CD4-positive, alpha-beta memory T cell (primary cell): ENCODE measurements at regions of chr15 and their contacts with region 1.

Region 1: GRCh38 chr15:73633111-73633990 is at the start of gene NPTN:
- DNase-seq: peak; percentile 96 to 98 (median 98)
- H3K4me3 ChIP-seq: peak within 1 kb of the TSS; percentile 40 to 69
- H3K4me3 Mint-ChIP-seq: peak within 1 kb of the TSS; percentile 87 to 94 (median 94)
- H3K27ac ChIP-seq: peak within 1 kb of the TSS; percentile 62
- H3K27ac Mint-ChIP-seq: peak within 1 kb of the TSS; percentile 80 to 96 (median 90)
- H3K4me1 ChIP-seq: peaks cover 37% of the 10 kb centered on the region
- H3K4me1 Mint-ChIP-seq: peaks cover 25 to 52% (median 46%) of the 10 kb centered on the region in 4 donors
- H3K27me3 ChIP-seq: no peaks in the 10 kb centered on the region
- H3K27me3 Mint-ChIP-seq: peaks cover 2 to 10% of the 10 kb centered on the region in 2 donors
- total RNA-seq, gene NPTN: 36.5 to 36.6 TPM

Region 2: DNA sequence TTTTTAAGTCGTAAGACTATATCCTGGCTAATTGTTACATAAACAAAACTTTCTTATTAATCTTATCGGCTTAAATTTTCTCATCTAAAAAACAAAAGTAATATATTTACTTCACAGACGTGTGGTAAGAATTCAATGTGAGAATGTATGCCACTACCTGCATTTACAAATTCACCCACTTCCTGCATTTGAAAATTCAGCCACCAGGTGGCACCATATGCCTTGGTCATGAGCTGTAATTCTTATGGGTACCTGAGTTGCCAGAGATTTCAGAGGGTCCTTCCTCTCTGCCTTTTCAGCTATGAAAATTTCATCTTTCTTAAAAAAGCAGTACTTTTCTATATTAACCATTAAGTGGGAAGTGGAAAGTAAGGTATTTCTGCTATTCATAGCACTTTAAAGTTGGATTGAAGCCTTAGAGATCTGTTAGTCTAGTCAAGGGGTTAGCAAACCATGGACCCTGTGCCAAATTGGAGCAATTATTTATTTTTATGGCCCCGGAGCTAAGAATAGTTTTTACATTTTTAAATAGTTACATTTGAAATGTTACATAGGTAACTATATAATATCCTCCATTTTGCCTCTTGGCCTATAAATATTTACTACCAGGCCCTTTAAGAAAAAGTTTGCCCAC is 392.4 kb before region 1 on chr15:
- CTCF ChIA-PET with region 1: interaction called, 4 read pairs
- POLR2A ChIA-PET with region 1: no interaction called
- intact Hi-C with region 1: loop called (anchors 1 kb)
- DNase-seq: peak; percentile 56 to 72 (median 67)
- H3K4me3 ChIP-seq: no peak overlapping the region
- H3K4me3 Mint-ChIP-seq: no peak overlapping the region
- H3K27ac ChIP-seq: no peak overlapping the region
- H3K27ac Mint-ChIP-seq: no peak overlapping the region
- H3K4me1 ChIP-seq: no peaks in the 10 kb centered on the region
- H3K4me1 Mint-ChIP-seq: no peaks in the 10 kb centered on the region
- H3K27me3 ChIP-seq: no peaks in the 10 kb centered on the region
- H3K27me3 Mint-ChIP-seq: no peaks in the 10 kb centered on the region

Region 3: DNA sequence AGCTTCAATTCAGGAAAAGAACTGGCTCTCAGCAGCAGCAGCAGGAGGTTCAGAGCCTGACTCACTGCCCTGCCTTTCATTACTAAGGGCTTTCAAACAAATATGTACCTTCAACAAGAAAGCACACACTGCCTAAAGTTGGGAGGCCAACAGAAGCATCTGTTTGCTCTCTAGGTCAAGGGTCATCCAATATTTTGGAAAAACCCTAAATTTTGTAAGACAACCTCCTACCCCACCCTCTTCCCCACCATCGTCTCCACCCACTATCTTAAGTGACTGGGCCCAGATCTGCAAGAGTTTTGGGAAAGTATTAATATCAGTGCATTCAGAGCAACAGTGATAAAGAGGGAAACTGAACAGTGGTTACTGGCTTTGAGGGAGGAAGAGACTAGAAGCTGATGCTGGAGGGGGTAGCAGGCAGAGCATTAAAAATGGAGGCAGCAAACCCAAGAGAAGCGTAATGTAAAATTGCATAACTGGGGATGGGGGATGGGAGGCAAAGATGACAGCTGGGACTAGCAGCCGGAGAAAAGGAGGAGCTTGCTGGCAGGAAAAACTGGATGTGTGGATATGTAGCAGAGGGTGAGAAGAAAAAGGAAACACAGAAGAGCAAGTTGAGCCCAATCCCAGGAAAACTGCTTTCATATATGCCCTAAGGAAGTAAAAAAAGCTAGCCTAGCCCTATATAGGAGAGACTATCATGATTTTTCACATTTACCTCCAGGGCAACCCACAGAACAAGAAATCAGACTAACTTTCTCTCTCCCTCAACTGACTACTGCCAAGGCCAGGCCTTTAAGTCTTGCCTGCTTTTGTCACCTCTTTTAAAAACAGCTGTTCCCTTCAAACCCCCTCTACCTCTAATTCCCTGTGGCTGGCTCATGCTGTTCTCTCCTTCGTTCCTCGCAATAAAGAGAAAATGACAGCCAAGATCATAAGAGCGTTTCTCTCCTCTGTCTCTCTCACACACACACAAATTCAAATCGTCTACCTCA is 31.6 kb before region 1 on chr15:
- CTCF ChIA-PET with region 1: interaction called, 28 read pairs
- POLR2A ChIA-PET with region 1: no interaction called
- intact Hi-C with region 1: no loop called
- DNase-seq: no peak
- H3K4me3 ChIP-seq: no peak overlapping the region
- H3K4me3 Mint-ChIP-seq: no peak overlapping the region
- H3K27ac ChIP-seq: no peak overlapping the region
- H3K27ac Mint-ChIP-seq: no peak overlapping the region
- H3K4me1 ChIP-seq: peaks cover 29% of the 10 kb centered on the region
- H3K4me1 Mint-ChIP-seq: peaks cover 17 to 44% (median 28%) of the 10 kb centered on the region in 4 donors
- H3K27me3 ChIP-seq: no peaks in the 10 kb centered on the region
- H3K27me3 Mint-ChIP-seq: no peaks in the 10 kb centered on the region

Region 4: GRCh38 chr15:73617301-73617831 is 16.0 kb before region 1 on chr15:
- CTCF ChIA-PET with region 1: interaction called, 55 read pairs
- POLR2A ChIA-PET with region 1: interaction called, 4 read pairs
- intact Hi-C with region 1: no loop called
- DNase-seq: no peak
- H3K4me3 ChIP-seq: no peak overlapping the region
- H3K4me3 Mint-ChIP-seq: no peak overlapping the region
- H3K27ac ChIP-seq: no peak overlapping the region
- H3K27ac Mint-ChIP-seq: peak overlapping the region in 1 of 7 donors; percentile 3
- H3K4me1 ChIP-seq: peaks cover 8% of the 10 kb centered on the region
- H3K4me1 Mint-ChIP-seq: peaks cover 29 to 51% (median 39%) of the 10 kb centered on the region in 4 donors
- H3K27me3 ChIP-seq: no peaks in the 10 kb centered on the region
- H3K27me3 Mint-ChIP-seq: no peaks in the 10 kb centered on the region

Region 5: GRCh38 chr15:73677146-73677607 is 43.8 kb after region 1 on chr15:
- CTCF ChIA-PET with region 1: interaction called, 14 read pairs
- POLR2A ChIA-PET with region 1: no interaction called
- intact Hi-C with region 1: loop called (anchors 2 kb)
- DNase-seq: peak; percentile 39 to 60 (median 48)
- H3K4me3 ChIP-seq: no peak overlapping the region
- H3K4me3 Mint-ChIP-seq: no peak overlapping the region
- H3K27ac ChIP-seq: no peak overlapping the region
- H3K27ac Mint-ChIP-seq: no peak overlapping the region
- H3K4me1 ChIP-seq: no peaks in the 10 kb centered on the region
- H3K4me1 Mint-ChIP-seq: peaks cover 0 to 5% (median 0%) of the 10 kb centered on the region in 4 donors
- H3K27me3 ChIP-seq: peaks cover 2% of the 10 kb centered on the region
- H3K27me3 Mint-ChIP-seq: peaks cover 17 to 24% of the 10 kb centered on the region in 2 donors

Region 6: DNA sequence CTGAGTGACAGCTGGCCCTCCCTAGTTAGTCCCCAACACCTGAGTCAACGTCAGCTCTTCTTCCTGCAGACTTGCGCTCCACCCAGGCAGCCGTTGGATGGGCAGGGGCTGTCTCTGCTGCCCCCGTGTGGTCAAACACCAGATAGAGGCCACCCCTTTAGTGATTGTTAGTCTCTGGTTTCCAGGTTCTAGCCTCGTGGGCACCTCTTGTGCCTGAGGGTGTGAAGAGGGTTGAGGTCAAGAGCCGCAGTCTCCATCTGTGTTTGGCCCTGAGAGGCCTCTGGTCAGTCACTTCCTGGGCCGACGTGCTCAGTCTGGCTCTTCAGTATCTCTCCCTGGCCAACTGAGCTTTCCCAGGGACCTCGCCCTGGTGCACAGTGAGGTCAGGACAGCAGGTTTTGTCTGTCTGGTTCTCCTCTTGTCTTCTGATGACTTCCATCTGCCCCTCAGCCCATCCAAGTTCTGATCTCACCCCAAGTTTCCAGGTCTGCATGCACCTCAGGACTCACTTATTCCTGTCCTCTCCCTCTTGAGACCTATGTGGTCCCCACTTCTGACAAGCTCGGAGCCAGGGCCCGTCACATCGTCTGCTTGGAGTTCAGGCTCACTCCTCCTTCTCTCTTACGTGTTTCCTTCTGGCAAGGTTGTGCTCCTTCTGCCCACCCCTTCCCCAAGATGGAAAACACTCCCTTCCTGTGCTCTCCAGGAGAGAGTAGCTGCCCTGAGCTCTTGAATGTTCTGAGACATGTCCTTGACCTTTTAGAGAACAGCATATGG is 71.7 kb after region 1 on chr15:
- CTCF ChIA-PET with region 1: interaction called, 59 read pairs
- POLR2A ChIA-PET with region 1: no interaction called
- intact Hi-C with region 1: loop called (anchors 1 kb)
- DNase-seq: peak; percentile 48 to 60 (median 51)
- H3K4me3 ChIP-seq: no peak overlapping the region
- H3K4me3 Mint-ChIP-seq: no peak overlapping the region
- H3K27ac ChIP-seq: no peak overlapping the region
- H3K27ac Mint-ChIP-seq: no peak overlapping the region
- H3K4me1 ChIP-seq: no peaks in the 10 kb centered on the region
- H3K4me1 Mint-ChIP-seq: peaks cover 0 to 4% (median 3%) of the 10 kb centered on the region in 4 donors
- H3K27me3 ChIP-seq: no peaks in the 10 kb centered on the region
- H3K27me3 Mint-ChIP-seq: peaks cover 3 to 15% of the 10 kb centered on the region in 2 donors

Region 7: GRCh38 chr15:73832657-73833056 is 199.3 kb after region 1 on chr15:
- CTCF ChIA-PET with region 1: no interaction called
- POLR2A ChIA-PET with region 1: no interaction called
- intact Hi-C with region 1: no loop called
- DNase-seq: no peak
- H3K4me3 ChIP-seq: no peak overlapping the region
- H3K4me3 Mint-ChIP-seq: no peak overlapping the region
- H3K27ac ChIP-seq: no peak overlapping the region
- H3K27ac Mint-ChIP-seq: no peak overlapping the region
- H3K4me1 ChIP-seq: no peaks in the 10 kb centered on the region
- H3K4me1 Mint-ChIP-seq: no peaks in the 10 kb centered on the region
- H3K27me3 ChIP-seq: peaks cover 6% of the 10 kb centered on the region
- H3K27me3 Mint-ChIP-seq: peaks cover 46 to 47% of the 10 kb centered on the region in 2 donors